Activated naive CD8-positive, alpha-beta T cell treated with anti-CD3 and anti-CD28 coated beads, Interleukin-2, amount 10 ng/mL, durations not matched to agents 7 days and 5 days (primary cell): ENCODE measurements at regions of chr12 and their contacts with region 1.

Region 1: GRCh38 chr12:32134189-32134888 is 27.7 kb downstream of the BICD1 start:
- DNase-seq: peak; percentile 38
- ATAC-seq: peak; percentile 88
- H3K4me3 Mint-ChIP-seq: peak overlapping the region; percentile 45
- H3K27ac Mint-ChIP-seq: peak overlapping the region; percentile 46
- H3K4me1 Mint-ChIP-seq: peaks cover 18% of the 10 kb centered on the region
- H3K27me3 Mint-ChIP-seq: no peaks in the 10 kb centered on the region

Region 2: GRCh38 chr12:31928246-31929026 is 205.9 kb before region 1 on chr12:
- POLR2A ChIA-PET with region 1: no interaction called
- DNase-seq: peak; percentile 44
- ATAC-seq: peak; percentile 76
- H3K4me3 Mint-ChIP-seq: peak overlapping the region; percentile 86
- H3K27ac Mint-ChIP-seq: peak overlapping the region; percentile 96
- H3K4me1 Mint-ChIP-seq: peaks cover 34% of the 10 kb centered on the region
- H3K27me3 Mint-ChIP-seq: no peaks in the 10 kb centered on the region

Region 3: DNA sequence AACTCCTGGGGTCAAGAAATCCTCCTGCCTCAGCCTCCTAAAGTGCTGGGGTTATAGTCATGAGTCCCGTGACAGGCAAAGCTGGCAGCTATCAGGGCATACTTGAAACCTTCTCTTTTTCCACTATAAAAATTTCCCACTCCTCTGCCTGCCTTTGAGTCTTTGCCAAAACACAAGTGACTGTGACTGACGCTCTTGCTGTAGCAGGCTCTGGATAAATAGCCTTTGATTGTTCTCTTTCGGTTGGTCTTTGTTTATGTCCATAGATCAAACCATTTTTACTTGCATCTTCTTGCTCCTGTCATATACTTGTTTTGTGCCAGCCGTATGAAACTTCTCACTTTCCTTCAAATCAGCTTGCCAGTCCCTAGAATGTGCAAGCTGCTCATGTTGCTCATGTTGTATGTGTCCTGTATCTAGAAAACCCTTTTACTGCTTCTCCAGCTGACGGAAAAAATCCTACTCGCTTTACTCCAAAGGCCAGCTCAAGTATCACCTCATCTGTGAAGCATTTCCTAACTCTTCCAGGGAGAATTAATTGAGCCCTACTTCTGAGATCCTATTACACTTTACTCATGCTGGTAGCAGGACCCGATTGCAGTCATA is 102.0 kb before region 1 on chr12:
- POLR2A ChIA-PET with region 1: no interaction called
- DNase-seq: no peak
- ATAC-seq: no peak
- H3K4me3 Mint-ChIP-seq: no peak overlapping the region
- H3K27ac Mint-ChIP-seq: no peak overlapping the region
- H3K4me1 Mint-ChIP-seq: peaks cover 6% of the 10 kb centered on the region
- H3K27me3 Mint-ChIP-seq: peaks cover 1% of the 10 kb centered on the region

Region 4: GRCh38 chr12:32106517-32107358 is 27.6 kb before region 1 on chr12 and contains the start of gene BICD1:
- POLR2A ChIA-PET with region 1: interaction called, 11 read pairs
- DNase-seq: peak; percentile 83
- ATAC-seq: peak; percentile 87
- H3K4me3 Mint-ChIP-seq: peak within 1 kb of the TSS; percentile 90
- H3K27ac Mint-ChIP-seq: peak within 1 kb of the TSS; percentile 87
- H3K4me1 Mint-ChIP-seq: peaks cover 18% of the 10 kb centered on the region
- H3K27me3 Mint-ChIP-seq: no peaks in the 10 kb centered on the region
- total RNA-seq, gene BICD1: 17.8 to 18.7 TPM

Region 5: GRCh38 chr12:32159925-32160324 is 25.6 kb after region 1 on chr12:
- POLR2A ChIA-PET with region 1: no interaction called
- DNase-seq: no peak
- ATAC-seq: no peak
- H3K4me3 Mint-ChIP-seq: no peak overlapping the region
- H3K27ac Mint-ChIP-seq: no peak overlapping the region
- H3K4me1 Mint-ChIP-seq: peaks cover 6% of the 10 kb centered on the region
- H3K27me3 Mint-ChIP-seq: no peaks in the 10 kb centered on the region